Left lung (tissue), 14 donors: ENCODE measurements at regions of chr6 and their contacts with region 1.

Region 1: DNA sequence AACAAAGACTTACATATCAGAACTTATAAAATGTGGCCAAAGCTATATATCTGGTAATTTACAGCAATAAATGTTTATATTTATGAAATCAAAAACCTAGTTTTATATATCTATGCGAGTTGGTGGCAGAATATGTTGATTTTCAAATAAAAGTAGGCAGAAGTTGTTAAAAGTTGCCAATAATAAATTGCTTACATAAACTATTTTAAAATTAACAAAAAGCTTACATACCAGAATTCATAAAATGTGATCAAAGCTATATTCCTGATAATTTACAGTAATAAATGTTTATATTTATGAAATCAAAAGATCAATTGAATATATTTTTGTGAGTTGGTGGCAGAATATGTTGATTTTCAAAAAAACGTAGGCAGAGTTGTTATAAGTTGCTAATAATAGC is 451.8 kb upstream of the KHDRBS2 start:
- DNase-seq: no peak
- ATAC-seq: no peak
- H3K4me3 ChIP-seq: no peak overlapping the region
- H3K27ac ChIP-seq: no peak overlapping the region
- H3K4me1 ChIP-seq: no peaks in the 10 kb centered on the region
- H3K27me3 ChIP-seq: no peaks in the 10 kb centered on the region
- CTCF ChIP-seq: no peak

Region 2: DNA sequence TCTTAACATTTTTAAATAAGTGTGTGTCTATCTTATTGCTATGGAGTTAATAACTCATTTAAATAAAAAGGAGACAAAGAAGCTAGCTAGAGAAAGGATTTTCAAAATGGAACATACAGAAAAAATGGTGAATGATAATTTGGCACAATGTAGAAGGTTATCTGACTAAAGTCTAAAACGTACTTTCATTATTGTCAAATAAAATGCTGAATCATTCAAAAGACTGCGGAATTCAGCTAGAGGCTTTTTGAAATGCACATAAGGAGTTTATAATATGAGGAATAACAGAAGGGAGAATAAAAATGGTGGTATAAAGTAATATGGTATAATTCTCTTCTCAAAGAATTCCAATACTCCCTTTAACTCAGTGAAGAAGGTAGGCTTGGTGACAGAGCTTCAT is 1049.6 kb before region 1 on chr6:
- intact Hi-C with region 1: loop called in 1 of 2 experiments (anchors 10 kb)
- DNase-seq: no peak
- ATAC-seq: no peak
- H3K4me3 ChIP-seq: no peak overlapping the region
- H3K27ac ChIP-seq: no peak overlapping the region
- H3K4me1 ChIP-seq: no peaks in the 10 kb centered on the region
- H3K27me3 ChIP-seq: no peaks in the 10 kb centered on the region
- CTCF ChIP-seq: no peak

Region 3: DNA sequence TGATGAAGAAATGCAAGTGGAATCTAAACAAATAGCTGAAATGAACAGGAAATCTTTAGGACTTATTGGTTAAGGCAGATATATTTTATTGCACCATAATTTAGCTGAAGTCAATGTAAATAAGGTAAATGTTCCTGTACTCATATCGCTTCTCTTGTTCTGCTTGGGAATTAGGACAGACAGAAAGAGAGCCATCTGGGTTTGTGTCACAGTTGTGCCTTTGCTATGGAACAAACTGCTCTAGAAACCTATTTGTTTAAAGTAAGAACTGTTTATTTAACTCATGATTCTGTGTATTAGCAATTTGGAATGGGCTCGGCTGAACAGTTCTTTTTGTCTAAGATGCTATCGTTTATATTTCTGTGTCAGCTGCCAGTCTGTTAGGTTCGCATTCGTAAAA is 308.0 kb before region 1 on chr6:
- intact Hi-C with region 1: no loop called
- DNase-seq: no peak
- ATAC-seq: no peak
- H3K4me3 ChIP-seq: no peak overlapping the region
- H3K27ac ChIP-seq: no peak overlapping the region
- H3K4me1 ChIP-seq: no peaks in the 10 kb centered on the region
- H3K27me3 ChIP-seq: no peaks in the 10 kb centered on the region
- CTCF ChIP-seq: no peak

Region 4: GRCh38 chr6:63426844-63427243 is 689.1 kb after region 1 on chr6:
- intact Hi-C with region 1: no loop called
- DNase-seq: no peak
- ATAC-seq: no peak
- H3K4me3 ChIP-seq: no peak overlapping the region
- H3K27ac ChIP-seq: no peak overlapping the region
- H3K4me1 ChIP-seq: no peaks in the 10 kb centered on the region
- H3K27me3 ChIP-seq: no peaks in the 10 kb centered on the region
- CTCF ChIP-seq: no peak